Activated CD8-positive, alpha-beta T cell treated with anti-CD3 and anti-CD28 coated beads for 36 hours (primary cell): ENCODE measurements at regions of chr7 and their contacts with region 1.

Region 1: DNA sequence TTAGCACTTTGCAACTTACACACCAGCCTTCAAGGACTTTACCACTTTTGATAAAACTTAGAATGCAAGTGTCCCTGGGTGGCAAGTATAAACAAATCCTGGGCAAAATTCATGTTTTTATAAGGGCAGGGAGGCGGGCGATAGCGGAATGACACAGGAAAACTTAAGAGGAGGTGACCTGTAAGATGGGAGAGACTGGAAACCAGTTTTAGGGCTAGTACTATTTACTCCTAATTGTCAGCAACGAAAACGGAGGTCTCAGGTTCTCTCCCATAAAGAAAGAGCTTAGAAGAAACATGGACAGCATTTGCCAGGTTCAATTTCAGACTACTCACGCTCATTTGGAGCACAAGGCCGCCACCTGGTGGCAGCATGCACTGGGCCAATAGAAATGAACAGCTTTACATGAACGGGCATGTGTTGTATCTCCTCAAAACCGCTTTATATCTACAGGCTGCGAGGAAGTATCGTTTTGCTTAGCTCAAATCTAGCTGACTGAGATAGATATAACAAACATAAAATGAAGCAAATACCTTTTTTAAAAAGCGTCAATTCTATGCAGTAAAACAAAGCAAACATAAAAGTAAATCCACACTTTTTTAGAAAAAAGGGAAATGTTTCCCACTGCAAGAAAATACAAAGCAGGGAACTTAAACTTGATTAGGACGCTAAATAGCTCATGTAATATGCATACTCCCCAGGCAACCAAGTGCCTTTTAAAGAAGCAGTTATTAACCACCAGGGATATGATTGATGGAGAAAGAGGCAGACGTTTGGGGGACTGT is 37.6 kb upstream of the SVOPL start:
- DNase-seq: peak; percentile 94
- ATAC-seq: peak; percentile 99
- H3K4me3 Mint-ChIP-seq: no peak overlapping the region
- H3K27ac Mint-ChIP-seq: no peak overlapping the region
- H3K4me1 Mint-ChIP-seq: peaks cover 9% of the 10 kb centered on the region
- H3K27me3 Mint-ChIP-seq: no peaks in the 10 kb centered on the region
- CTCF ChIP-seq: peak; percentile 85

Region 2: GRCh38 chr7:138161600-138162081 is 577.1 kb before region 1 on chr7:
- CTCF ChIA-PET with region 1: interaction called, 22 read pairs
- POLR2A ChIA-PET with region 1: no interaction called
- intact Hi-C with region 1: loop called (anchors 2 kb)
- DNase-seq: peak; percentile 88
- ATAC-seq: peak; percentile 99
- H3K4me3 Mint-ChIP-seq: no peak overlapping the region
- H3K27ac Mint-ChIP-seq: no peak overlapping the region
- H3K4me1 Mint-ChIP-seq: no peaks in the 10 kb centered on the region
- H3K27me3 Mint-ChIP-seq: no peaks in the 10 kb centered on the region
- CTCF ChIP-seq: peak; percentile 65

Region 3: GRCh38 chr7:138459413-138460175 is 279.1 kb before region 1 on chr7:
- CTCF ChIA-PET with region 1: interaction called, 6 read pairs
- POLR2A ChIA-PET with region 1: no interaction called
- intact Hi-C with region 1: loop called (anchors 5 kb)
- DNase-seq: peak; percentile 98
- ATAC-seq: peak; percentile 91
- H3K4me3 Mint-ChIP-seq: peak overlapping the region; percentile 97
- H3K27ac Mint-ChIP-seq: peak overlapping the region; percentile 71
- H3K4me1 Mint-ChIP-seq: peaks cover 20% of the 10 kb centered on the region
- H3K27me3 Mint-ChIP-seq: no peaks in the 10 kb centered on the region
- CTCF ChIP-seq: peak; percentile 60

Region 4: GRCh38 chr7:138654616-138655015 is 84.1 kb before region 1 on chr7:
- CTCF ChIA-PET with region 1: no interaction called
- POLR2A ChIA-PET with region 1: no interaction called
- intact Hi-C with region 1: no loop called
- DNase-seq: no peak
- ATAC-seq: no peak
- H3K4me3 Mint-ChIP-seq: no peak overlapping the region
- H3K27ac Mint-ChIP-seq: no peak overlapping the region
- H3K4me1 Mint-ChIP-seq: no peaks in the 10 kb centered on the region
- H3K27me3 Mint-ChIP-seq: no peaks in the 10 kb centered on the region
- CTCF ChIP-seq: no peak

Region 5: GRCh38 chr7:138750901-138751464 is 12.2 kb after region 1 on chr7:
- CTCF ChIA-PET with region 1: interaction called, 13 read pairs
- POLR2A ChIA-PET with region 1: no interaction called
- intact Hi-C with region 1: no loop called
- DNase-seq: no peak
- ATAC-seq: no peak
- H3K4me3 Mint-ChIP-seq: no peak overlapping the region
- H3K27ac Mint-ChIP-seq: no peak overlapping the region
- H3K4me1 Mint-ChIP-seq: peaks cover 60% of the 10 kb centered on the region
- H3K27me3 Mint-ChIP-seq: no peaks in the 10 kb centered on the region
- CTCF ChIP-seq: no peak

Region 6: GRCh38 chr7:138875794-138876193 is 137.1 kb after region 1 on chr7:
- CTCF ChIA-PET with region 1: interaction called, 10 read pairs
- POLR2A ChIA-PET with region 1: no interaction called
- intact Hi-C with region 1: no loop called
- DNase-seq: peak; percentile 84
- ATAC-seq: peak; percentile 98
- H3K4me3 Mint-ChIP-seq: no peak overlapping the region
- H3K27ac Mint-ChIP-seq: peak overlapping the region; percentile 82
- H3K4me1 Mint-ChIP-seq: peaks cover 17% of the 10 kb centered on the region
- H3K27me3 Mint-ChIP-seq: no peaks in the 10 kb centered on the region
- CTCF ChIP-seq: no peak